ENCODE measurements at regions of chr12 and their contacts with region 1.

Region 1: DNA sequence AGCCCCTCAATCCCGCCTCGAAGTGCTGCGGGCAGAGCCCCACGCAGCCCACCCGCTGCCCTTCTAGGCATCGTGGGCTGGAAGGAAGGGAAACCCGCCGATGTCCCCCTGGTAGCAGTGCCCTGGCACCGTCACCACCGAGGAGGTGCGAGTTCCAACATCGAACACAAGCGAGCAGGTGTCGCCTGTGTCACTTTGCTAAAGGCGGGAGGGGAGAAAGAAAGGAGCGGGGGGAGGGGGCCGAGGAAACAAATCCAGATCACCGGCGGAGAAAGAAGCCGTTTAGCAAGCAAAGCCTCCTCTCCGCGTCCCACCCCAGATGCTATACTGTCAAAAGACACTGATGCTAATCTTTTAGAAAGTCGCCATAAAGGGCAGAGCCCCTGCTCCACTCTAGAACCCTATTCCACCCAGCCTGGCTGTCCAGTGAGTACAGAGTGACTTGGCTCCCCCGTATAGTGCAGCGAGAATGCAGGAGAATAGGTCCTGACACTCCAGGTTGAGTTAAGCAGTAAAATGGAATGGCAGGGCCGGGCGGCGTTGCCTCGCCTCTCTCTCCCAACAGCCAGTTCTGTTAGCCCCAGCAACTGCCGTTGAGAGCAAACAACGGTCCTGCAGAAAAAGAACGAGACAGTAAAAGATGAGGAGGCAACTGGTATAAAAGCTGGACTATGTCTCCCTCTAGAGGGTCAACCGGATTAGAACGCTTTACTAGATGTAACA is 67.9 kb upstream of the USP15 start:
- H3K4me3 ChIP-seq: peak overlapping the region; percentile 11
- H3K27ac ChIP-seq: no peak overlapping the region
- H3K4me1 ChIP-seq: peaks cover 6% of the 10 kb centered on the region; the same call in 1 of the 2 replicates
- CTCF ChIP-seq: peak; percentile 47

Region 2: DNA sequence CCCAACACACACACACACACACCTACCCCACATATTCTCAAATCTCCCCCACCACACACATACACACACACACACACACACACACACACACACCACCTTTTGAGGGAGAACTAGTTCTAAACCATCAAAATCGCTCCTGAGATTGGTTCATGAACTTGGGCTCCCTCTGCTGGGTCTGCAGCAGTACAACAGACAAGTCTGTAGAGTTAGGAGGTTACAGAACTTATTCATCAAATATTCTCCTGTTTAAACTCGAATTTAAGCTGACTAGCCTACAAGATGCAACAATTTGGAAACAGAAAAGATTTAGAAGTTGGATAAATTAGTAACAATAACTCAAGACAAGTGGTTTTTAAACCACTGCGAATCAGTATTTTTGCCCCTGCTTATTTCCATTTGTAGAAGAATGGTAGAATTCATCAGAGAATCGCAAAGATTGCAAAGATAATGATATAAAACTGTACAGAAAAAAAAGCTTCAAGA is 68.6 kb before region 1 on chr12:
- CTCF ChIA-PET with region 1: interaction called, 12 read pairs
- POLR2A ChIA-PET with region 1: no interaction called
- H3K4me3 ChIP-seq: no peak overlapping the region
- H3K27ac ChIP-seq: no peak overlapping the region
- H3K4me1 ChIP-seq: no peaks in the 10 kb centered on the region
- CTCF ChIP-seq: 0 out of 2 replicates have a peak, but pooled peaks have one; percentile 35

Region 3: GRCh38 chr12:62210422-62210821 is 18.1 kb after region 1 on chr12:
- CTCF ChIA-PET with region 1: interaction called, 10 read pairs
- POLR2A ChIA-PET with region 1: no interaction called
- H3K4me3 ChIP-seq: no peak overlapping the region
- H3K27ac ChIP-seq: no peak overlapping the region
- H3K4me1 ChIP-seq: 0 out of 2 replicates have a peak, but pooled peaks cover 3% of the 10 kb centered on the region
- CTCF ChIP-seq: no peak

Region 4: DNA sequence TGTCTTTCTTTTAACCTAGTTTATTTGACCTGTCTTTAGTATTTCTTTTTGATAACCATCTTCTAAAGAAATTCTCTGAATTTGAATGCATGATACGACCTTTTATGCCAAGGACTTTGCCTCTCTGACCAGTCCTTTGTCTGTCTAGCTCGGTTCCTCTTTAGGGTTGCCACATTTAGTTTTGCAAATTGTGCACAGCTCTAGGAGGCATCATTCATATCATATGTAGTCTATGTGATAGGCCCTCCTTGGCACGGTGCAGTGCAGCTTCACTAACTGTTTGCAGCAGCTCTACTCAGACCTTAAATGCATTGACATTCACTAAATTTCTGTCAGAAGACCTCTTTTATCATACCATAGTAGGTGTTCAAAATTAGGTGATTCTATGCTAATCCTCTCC is 143.5 kb after region 1 on chr12:
- CTCF ChIA-PET with region 1: no interaction called
- POLR2A ChIA-PET with region 1: no interaction called
- H3K4me3 ChIP-seq: no peak overlapping the region
- H3K27ac ChIP-seq: no peak overlapping the region
- H3K4me1 ChIP-seq: no peaks in the 10 kb centered on the region
- CTCF ChIP-seq: no peak